Activated CD4-positive, alpha-beta T cell treated with anti-CD3 and anti-CD28 coated beads for 36 hours (primary cell): ENCODE measurements at regions of chr12 and their contacts with region 1.

Region 1: GRCh38 chr12:94532490-94533422 is 73.1 kb upstream of the CEP83 start:
- DNase-seq: peak; percentile 84
- ATAC-seq: peak; percentile 89
- H3K4me3 Mint-ChIP-seq: no peak overlapping the region
- H3K27ac Mint-ChIP-seq: no peak overlapping the region
- H3K4me1 Mint-ChIP-seq: no peaks in the 10 kb centered on the region
- H3K27me3 Mint-ChIP-seq: peaks cover 6% of the 10 kb centered on the region

Region 2: GRCh38 chr12:94126067-94126466 is 406.7 kb before region 1 on chr12:
- CTCF ChIA-PET with region 1: interaction called, 3 read pairs
- POLR2A ChIA-PET with region 1: interaction called, 10 read pairs
- intact Hi-C with region 1: no loop called
- DNase-seq: no peak
- ATAC-seq: no peak
- H3K4me3 Mint-ChIP-seq: no peak overlapping the region
- H3K27ac Mint-ChIP-seq: no peak overlapping the region
- H3K4me1 Mint-ChIP-seq: peaks cover 39% of the 10 kb centered on the region
- H3K27me3 Mint-ChIP-seq: no peaks in the 10 kb centered on the region

Region 3: GRCh38 chr12:94133964-94134795 is 398.6 kb before region 1 on chr12:
- CTCF ChIA-PET with region 1: interaction called, 13 read pairs
- POLR2A ChIA-PET with region 1: no interaction called
- intact Hi-C with region 1: loop called (anchors 1 kb)
- DNase-seq: peak; percentile 51
- ATAC-seq: peak; percentile 91
- H3K4me3 Mint-ChIP-seq: no peak overlapping the region
- H3K27ac Mint-ChIP-seq: no peak overlapping the region
- H3K4me1 Mint-ChIP-seq: peaks cover 3% of the 10 kb centered on the region
- H3K27me3 Mint-ChIP-seq: no peaks in the 10 kb centered on the region

Region 4: GRCh38 chr12:94140556-94140955 is 392.2 kb before region 1 on chr12:
- CTCF ChIA-PET with region 1: interaction called, 13 read pairs
- POLR2A ChIA-PET with region 1: no interaction called
- intact Hi-C with region 1: loop called (anchors 1 kb)
- DNase-seq: peak; percentile 79
- ATAC-seq: peak; percentile 81
- H3K4me3 Mint-ChIP-seq: no peak overlapping the region
- H3K27ac Mint-ChIP-seq: no peak overlapping the region
- H3K4me1 Mint-ChIP-seq: no peaks in the 10 kb centered on the region
- H3K27me3 Mint-ChIP-seq: no peaks in the 10 kb centered on the region

Region 5: GRCh38 chr12:94326727-94327126 is 206.0 kb before region 1 on chr12:
- CTCF ChIA-PET with region 1: no interaction called
- POLR2A ChIA-PET with region 1: no interaction called
- intact Hi-C with region 1: loop called (anchors 2 kb)
- DNase-seq: no peak
- ATAC-seq: peak; percentile 86
- H3K4me3 Mint-ChIP-seq: no peak overlapping the region
- H3K27ac Mint-ChIP-seq: no peak overlapping the region
- H3K4me1 Mint-ChIP-seq: peaks cover 19% of the 10 kb centered on the region
- H3K27me3 Mint-ChIP-seq: no peaks in the 10 kb centered on the region

Region 6: DNA sequence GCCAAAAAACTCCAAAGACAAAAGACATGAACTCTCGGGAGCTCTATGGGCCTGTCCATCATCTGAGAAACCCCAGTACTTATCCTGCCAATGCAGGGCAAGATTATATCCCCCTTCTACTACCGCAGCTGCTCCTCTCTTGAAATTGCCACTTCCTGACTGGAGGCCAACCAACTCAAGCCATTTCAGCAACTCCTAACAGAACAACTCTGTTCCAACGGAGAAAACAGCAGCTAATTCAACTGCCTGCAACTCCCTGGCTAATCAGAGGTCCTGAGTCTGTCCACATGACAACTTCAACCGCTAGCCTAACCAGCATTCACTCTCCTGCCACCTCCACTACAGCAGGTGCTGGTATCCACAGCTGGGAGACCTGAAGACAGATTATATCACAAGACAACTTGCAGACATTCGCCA is 97.2 kb before region 1 on chr12:
- CTCF ChIA-PET with region 1: interaction called, 3 read pairs
- POLR2A ChIA-PET with region 1: no interaction called
- intact Hi-C with region 1: loop called in 1 of 2 experiments (anchors 2 kb)
- DNase-seq: no peak
- ATAC-seq: peak; percentile 19
- H3K4me3 Mint-ChIP-seq: no peak overlapping the region
- H3K27ac Mint-ChIP-seq: no peak overlapping the region
- H3K4me1 Mint-ChIP-seq: peaks cover 26% of the 10 kb centered on the region
- H3K27me3 Mint-ChIP-seq: no peaks in the 10 kb centered on the region

Region 7: DNA sequence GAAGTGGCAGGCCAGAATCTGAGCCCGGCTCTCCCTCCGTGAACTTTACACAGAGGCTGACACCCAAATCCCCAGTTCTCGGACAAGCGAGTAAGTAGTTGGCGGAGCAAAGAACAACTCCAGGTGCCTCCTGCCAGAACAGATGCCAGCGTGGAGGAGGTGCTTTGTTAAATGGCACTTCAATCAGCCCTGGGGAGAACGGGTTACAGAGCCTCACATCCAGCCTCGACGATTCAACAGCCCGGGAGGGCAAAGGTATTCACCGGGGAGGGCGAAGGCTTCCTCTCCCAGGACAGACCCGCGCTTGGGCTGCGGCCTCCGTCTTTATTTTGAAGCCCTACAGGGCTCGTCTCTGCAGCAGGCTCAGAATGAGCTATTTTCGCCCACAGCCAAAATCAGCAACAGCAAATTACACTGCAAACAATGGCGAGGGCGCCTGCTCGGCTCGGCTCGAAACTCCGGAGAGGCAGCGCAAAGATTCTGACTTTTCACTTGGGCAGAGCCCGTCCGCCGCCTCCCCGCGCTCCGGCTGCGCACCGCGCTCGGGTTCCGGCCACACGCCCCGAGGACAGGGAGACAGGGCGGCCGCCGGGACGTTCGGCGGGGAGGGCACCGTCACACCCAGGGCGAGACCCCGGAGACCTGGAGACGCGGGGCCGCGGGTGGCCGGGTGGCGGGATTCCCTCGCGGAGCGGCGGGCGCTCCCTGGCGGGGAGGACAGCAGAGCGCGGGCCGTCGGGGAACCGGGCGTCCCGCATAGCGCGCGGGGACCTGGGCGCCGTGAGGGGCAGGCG is 116.8 kb after region 1 on chr12:
- CTCF ChIA-PET with region 1: no interaction called
- POLR2A ChIA-PET with region 1: no interaction called
- intact Hi-C with region 1: no loop called
- DNase-seq: peak; percentile 46
- ATAC-seq: peak; percentile 70
- H3K4me3 Mint-ChIP-seq: peak overlapping the region; percentile 60
- H3K27ac Mint-ChIP-seq: no peak overlapping the region
- H3K4me1 Mint-ChIP-seq: peaks cover 7% of the 10 kb centered on the region
- H3K27me3 Mint-ChIP-seq: peaks cover 60% of the 10 kb centered on the region